PC-9 (cell line): ENCODE measurements at regions of chr20 and their contacts with region 1.

Region 1: DNA sequence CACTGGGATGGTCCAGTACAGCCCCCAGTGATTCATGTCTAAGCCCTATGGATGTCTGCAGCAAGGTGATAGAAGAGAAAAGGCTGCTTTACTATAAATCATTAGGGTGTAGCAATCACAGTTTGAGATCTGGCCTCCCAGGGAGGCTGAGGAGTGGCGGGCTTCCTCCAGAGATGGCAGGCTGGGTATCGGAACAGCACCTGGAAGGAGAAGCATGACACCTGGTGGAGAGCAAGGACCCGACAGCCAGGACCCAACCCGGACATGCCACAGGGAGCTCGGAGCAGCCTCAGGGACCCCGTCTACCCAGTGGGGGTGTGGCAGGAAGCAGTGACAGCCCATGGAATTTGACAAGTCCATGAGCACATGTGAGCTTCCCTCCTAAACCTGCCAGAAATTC is 114.8 kb upstream of the CD93 start:
- DNase-seq: peak; percentile 49 to 60
- H3K4me3 ChIP-seq: no peak overlapping the region
- H3K27ac ChIP-seq: no peak overlapping the region
- H3K4me1 ChIP-seq: no peaks in the 10 kb centered on the region
- H3K27me3 ChIP-seq: no peaks in the 10 kb centered on the region
- CTCF ChIP-seq: peak; percentile 72

Region 2: GRCh38 chr20:21921251-21921650 is 1279.7 kb before region 1 on chr20:
- CTCF ChIA-PET with region 1: no interaction called
- POLR2A ChIA-PET with region 1: no interaction called
- intact Hi-C with region 1: no loop called
- DNase-seq: no peak
- H3K4me3 ChIP-seq: no peak overlapping the region
- H3K27ac ChIP-seq: no peak overlapping the region
- H3K4me1 ChIP-seq: no peaks in the 10 kb centered on the region
- H3K27me3 ChIP-seq: no peaks in the 10 kb centered on the region; the same call in 1 of the 2 replicates
- CTCF ChIP-seq: no peak

Region 3: DNA sequence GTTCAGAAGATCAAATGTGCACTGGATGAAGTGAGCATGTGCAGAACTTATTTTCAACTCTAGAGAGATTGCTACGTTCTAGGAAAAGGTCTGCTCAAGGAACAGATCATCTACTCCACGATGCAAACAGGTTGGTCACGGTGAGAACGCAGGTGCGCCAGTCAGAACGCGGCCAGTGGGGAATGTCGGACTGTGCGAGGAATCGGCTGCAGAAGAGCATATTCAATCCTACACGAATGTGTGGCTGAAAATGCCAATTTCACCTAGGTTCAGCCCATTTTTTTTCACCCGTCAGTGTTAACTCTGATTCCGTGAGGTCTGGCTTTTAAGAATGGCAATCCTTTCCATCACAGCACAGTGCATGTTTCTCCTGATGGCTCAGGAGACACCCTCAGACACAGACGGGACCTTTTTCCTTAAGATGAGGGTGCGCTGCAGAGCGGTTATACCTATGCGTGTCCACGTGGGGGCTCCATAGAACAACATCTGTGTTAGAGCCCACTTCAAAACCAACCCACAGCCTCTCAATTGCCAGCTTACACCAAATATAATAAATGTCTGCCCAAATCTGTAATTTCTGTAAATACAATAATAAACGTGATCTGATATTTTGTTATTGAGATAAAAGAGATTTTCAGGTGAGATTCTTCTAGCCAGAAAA is 866.9 kb before region 1 on chr20:
- CTCF ChIA-PET with region 1: no interaction called
- POLR2A ChIA-PET with region 1: no interaction called
- intact Hi-C with region 1: loop called (anchors 10 kb)
- DNase-seq: peak in 1 of 2 experiments; percentile 65
- H3K4me3 ChIP-seq: no peak overlapping the region
- H3K27ac ChIP-seq: no peak overlapping the region
- H3K4me1 ChIP-seq: no peaks in the 10 kb centered on the region
- H3K27me3 ChIP-seq: peaks cover 47% of the 10 kb centered on the region
- CTCF ChIP-seq: peak; percentile 85

Region 4: DNA sequence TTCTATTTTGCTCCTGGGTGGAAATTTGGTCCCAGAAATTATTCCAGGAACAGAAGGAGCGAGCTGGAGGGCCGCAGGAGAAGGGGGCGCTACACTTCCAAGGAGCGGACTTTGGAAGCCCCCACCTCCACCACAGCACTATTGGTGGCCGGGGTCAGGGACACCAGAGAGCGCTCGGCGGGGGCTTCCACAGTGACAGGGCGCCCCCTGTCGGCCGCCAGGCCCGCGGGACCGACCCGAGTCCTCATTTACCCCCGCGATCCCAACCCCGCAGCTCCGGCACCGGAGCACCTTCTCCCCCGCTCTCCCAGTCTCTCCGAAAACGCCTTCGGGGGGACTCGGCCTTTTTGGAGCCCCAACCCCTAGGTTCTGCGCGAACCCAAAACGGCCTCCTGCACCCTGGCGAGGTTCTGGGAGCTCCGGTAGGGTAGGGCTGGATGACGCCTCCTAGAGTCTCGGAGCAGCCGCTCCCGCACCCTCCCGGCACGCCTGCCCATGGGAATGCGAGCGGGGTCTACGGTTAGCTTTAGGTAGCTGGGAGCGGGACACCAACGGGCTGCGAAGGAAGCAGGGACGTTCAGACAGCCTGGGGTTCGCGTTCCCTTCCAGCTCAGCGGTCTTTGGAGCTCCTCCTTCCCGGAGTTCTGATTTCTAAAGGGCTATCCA is 614.1 kb before region 1 on chr20:
- CTCF ChIA-PET with region 1: interaction called, 22 read pairs
- POLR2A ChIA-PET with region 1: no interaction called
- intact Hi-C with region 1: no loop called
- DNase-seq: no peak
- H3K4me3 ChIP-seq: no peak overlapping the region
- H3K27ac ChIP-seq: no peak overlapping the region
- H3K4me1 ChIP-seq: no peaks in the 10 kb centered on the region
- H3K27me3 ChIP-seq: no peaks in the 10 kb centered on the region
- CTCF ChIP-seq: peak; percentile 64

Region 5: DNA sequence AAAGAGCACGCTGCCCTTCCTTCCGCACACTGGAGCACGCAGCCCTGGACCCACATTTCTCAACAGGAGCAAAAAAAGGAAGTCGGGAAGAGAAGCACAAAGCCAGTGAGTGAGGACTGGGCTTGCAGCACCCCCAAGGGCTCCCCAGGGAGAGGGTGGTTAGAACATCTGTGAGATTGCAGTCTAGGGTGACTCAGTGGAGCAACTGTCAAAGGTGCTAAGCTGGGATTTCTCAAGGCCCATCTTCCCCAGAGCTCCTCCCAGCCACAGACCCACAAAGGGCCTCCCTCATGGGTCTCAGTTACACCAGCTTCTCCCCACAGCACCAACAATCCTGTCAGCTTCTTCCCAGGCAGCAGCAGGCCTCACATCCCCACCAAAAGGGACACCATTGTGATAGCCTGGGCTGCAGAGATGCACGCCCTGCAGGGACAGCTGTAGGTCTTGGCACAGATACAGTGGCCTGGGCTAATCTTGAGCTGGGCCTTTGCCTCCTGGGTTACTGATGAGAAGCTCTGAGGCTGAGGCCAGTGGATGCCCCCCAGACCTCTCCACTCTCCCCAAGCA is 75.2 kb before region 1 on chr20:
- CTCF ChIA-PET with region 1: no interaction called
- POLR2A ChIA-PET with region 1: no interaction called
- intact Hi-C with region 1: no loop called
- DNase-seq: no peak
- H3K4me3 ChIP-seq: no peak overlapping the region
- H3K27ac ChIP-seq: no peak overlapping the region
- H3K4me1 ChIP-seq: peaks cover 19% of the 10 kb centered on the region; the same call in 1 of the 2 replicates
- H3K27me3 ChIP-seq: no peaks in the 10 kb centered on the region
- CTCF ChIP-seq: no peak

Region 6: GRCh38 chr20:23283096-23283850 is 82.4 kb after region 1 on chr20:
- CTCF ChIA-PET with region 1: no interaction called
- POLR2A ChIA-PET with region 1: no interaction called
- intact Hi-C with region 1: no loop called
- DNase-seq: no peak
- H3K4me3 ChIP-seq: no peak overlapping the region
- H3K27ac ChIP-seq: no peak overlapping the region
- H3K4me1 ChIP-seq: no peaks in the 10 kb centered on the region
- H3K27me3 ChIP-seq: no peaks in the 10 kb centered on the region
- CTCF ChIP-seq: no peak